OCI-LY7 (cell line): ENCODE measurements at regions of chr2 and their contacts with region 1.

Region 1: GRCh38 chr2:130797493-130798435 is 39.0 kb upstream of the ARHGEF4 start:
- DNase-seq: peak; percentile 89
- H3K4me3 ChIP-seq: peak overlapping the region; percentile 72
- H3K27ac ChIP-seq: no peak overlapping the region
- H3K4me1 ChIP-seq: no peaks in the 10 kb centered on the region
- CTCF ChIP-seq: peak; percentile 75

Region 2: DNA sequence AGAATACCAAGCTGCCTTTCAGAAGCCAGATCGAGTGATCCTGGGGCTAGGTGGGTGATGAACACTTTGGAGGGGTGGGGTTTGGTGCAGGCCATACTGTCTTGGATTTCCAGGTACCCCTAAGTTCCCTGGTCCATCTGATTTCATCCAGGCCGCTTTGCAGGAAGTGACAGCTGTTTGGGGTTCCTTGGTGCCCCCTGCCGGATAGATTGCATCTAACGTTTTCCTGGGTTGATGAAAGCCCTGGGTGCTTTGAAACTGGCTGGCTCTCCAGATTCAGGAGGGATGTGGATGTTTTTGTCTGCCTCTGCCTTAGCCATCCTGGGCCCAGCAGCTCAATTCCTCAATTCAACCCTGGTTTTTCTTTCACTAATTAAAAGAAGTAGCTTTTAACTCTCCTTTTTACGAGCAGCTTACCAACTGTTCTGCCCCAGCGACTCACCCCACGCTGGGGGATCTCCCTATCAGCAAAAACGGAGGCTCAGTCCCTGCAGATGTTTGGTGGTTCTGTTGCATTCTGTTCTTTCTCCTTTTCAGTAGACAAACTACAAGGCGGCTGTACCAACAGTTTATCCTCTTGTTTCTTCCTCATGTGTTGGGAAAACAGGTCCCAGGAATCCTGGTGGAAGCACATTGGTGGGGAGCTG is 76.1 kb after region 1 on chr2:
- CTCF ChIA-PET with region 1: interaction called, 3 read pairs
- POLR2A ChIA-PET with region 1: interaction called, 3 read pairs
- intact Hi-C with region 1: loop called (anchors 1 kb)
- DNase-seq: peak; percentile 71
- H3K4me3 ChIP-seq: no peak overlapping the region
- H3K27ac ChIP-seq: no peak overlapping the region
- H3K4me1 ChIP-seq: no peaks in the 10 kb centered on the region
- CTCF ChIP-seq: peak; percentile 85

Region 3: GRCh38 chr2:130920415-130921163 is 122.8 kb after region 1 on chr2:
- CTCF ChIA-PET with region 1: interaction called, 3 read pairs
- POLR2A ChIA-PET with region 1: no interaction called
- intact Hi-C with region 1: loop called (anchors 1 kb)
- DNase-seq: peak; percentile 38
- H3K4me3 ChIP-seq: no peak overlapping the region
- H3K27ac ChIP-seq: no peak overlapping the region
- H3K4me1 ChIP-seq: no peaks in the 10 kb centered on the region
- CTCF ChIP-seq: peak; percentile 96

Region 4: DNA sequence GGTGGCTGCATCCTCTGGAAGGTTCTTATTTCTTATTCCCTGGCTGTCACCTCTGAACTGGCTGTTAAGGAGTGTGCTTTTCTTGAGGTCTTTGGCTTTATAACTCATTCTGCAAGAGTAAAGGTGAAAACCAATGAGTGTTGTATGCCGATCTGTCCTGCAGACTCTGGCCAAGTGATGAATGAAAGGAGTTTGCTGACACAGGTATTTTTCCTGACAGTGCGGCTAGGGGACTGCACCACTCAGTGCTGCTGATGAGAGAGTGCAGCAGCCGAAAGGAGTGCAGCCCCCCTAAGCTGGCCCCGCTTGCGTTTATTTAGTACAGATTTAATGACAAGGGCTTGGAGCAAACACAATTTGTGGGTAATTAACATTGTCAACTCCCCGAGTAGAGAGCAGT is 524.4 kb after region 1 on chr2:
- CTCF ChIA-PET with region 1: no interaction called
- POLR2A ChIA-PET with region 1: no interaction called
- intact Hi-C with region 1: no loop called
- DNase-seq: no peak
- H3K4me3 ChIP-seq: no peak overlapping the region
- H3K27ac ChIP-seq: no peak overlapping the region
- H3K4me1 ChIP-seq: no peaks in the 10 kb centered on the region
- CTCF ChIP-seq: no peak